BJ (cell line): ENCODE measurements at regions of chr17 and their contacts with region 1.

Region 1: GRCh38 chr17:30336369-30337171 is 2.7 kb upstream of the TMIGD1 start:
- DNase-seq: no peak
- H3K4me3 ChIP-seq: no peak overlapping the region
- H3K27me3 ChIP-seq: no peaks in the 10 kb centered on the region
- CTCF ChIP-seq: peak; percentile 40; the same call in 1 of the 2 replicates

Region 2: DNA sequence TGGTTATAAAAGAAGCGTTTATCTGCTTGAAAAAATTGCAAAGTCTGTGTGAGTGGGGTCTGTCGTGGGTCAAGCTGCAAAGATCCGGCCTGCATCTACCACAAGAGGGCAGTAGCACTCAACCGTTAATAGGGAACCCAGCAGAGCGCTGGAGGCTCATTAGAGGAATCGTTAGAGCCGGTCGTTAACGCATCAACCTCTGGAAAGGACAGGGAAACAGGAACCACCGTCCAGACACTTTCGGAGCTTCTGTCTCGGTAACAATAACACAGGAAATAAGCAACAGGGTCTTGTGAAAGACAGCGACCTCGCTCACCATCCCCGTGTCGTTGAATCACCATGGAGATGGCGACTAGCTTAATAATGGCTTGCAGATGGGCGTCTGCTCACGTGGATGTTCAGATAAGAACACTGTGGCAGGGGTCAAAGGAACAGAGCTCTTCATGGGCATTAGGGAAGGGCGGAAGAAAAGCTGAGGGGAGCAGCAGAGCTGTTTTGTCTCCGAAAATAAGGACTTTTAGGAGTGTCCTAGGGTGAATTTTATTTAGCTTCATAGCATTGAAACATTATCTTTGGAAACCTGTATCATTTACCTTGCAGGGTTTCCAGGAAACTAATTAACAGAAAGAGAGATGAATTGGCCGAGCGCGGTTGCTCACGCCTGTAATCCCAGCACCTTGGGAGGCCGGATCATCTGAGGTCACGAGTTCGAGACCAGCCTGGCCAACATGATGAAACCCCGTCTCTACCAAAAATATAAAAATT is 231.8 kb before region 1 on chr17:
- CTCF ChIA-PET with region 1: interaction called, 20 read pairs
- POLR2A ChIA-PET with region 1: no interaction called
- DNase-seq: no peak
- H3K4me3 ChIP-seq: peak overlapping the region; percentile 38
- H3K27me3 ChIP-seq: peaks cover 4% of the 10 kb centered on the region; the same call in 1 of the 2 replicates
- CTCF ChIP-seq: peak; percentile 94

Region 3: DNA sequence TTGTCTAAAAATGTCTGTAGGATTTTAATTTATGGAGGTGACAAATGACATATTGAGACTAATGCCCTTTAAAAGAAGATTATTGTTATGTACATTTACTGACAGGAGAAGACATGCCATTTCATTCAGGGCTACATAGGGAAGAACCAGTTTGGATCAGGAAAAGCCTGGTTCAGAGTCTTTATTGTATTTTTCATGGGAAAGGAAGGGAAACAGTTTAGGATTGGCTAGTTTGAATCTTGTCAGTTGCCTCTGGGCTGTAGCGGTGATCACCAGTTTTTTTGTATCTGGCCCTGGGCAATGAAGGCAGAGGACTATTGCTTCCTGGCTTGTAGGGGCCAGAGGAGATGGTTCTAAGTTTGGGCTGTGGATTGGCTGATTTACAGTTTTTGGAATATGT is 188.2 kb before region 1 on chr17:
- CTCF ChIA-PET with region 1: no interaction called
- POLR2A ChIA-PET with region 1: no interaction called
- DNase-seq: no peak
- H3K4me3 ChIP-seq: no peak overlapping the region
- H3K27me3 ChIP-seq: no peaks in the 10 kb centered on the region
- CTCF ChIP-seq: no peak

Region 4: GRCh38 chr17:30312226-30312625 is 24.3 kb before region 1 on chr17:
- CTCF ChIA-PET with region 1: interaction called, 5 read pairs
- POLR2A ChIA-PET with region 1: interaction called, 21 read pairs
- DNase-seq: no peak
- H3K4me3 ChIP-seq: no peak overlapping the region
- H3K27me3 ChIP-seq: no peaks in the 10 kb centered on the region
- CTCF ChIP-seq: no peak

Region 5: GRCh38 chr17:30361766-30362279 is 25.3 kb after region 1 on chr17:
- CTCF ChIA-PET with region 1: interaction called, 10 read pairs
- POLR2A ChIA-PET with region 1: no interaction called
- DNase-seq: no peak
- H3K4me3 ChIP-seq: no peak overlapping the region
- H3K27me3 ChIP-seq: no peaks in the 10 kb centered on the region
- CTCF ChIP-seq: no peak

Region 6: GRCh38 chr17:30477083-30477773 is 140.7 kb after region 1 on chr17 and contains the start of gene GOSR1:
- CTCF ChIA-PET with region 1: interaction called, 17 read pairs
- POLR2A ChIA-PET with region 1: no interaction called
- DNase-seq: peak; percentile 71
- H3K4me3 ChIP-seq: peak within 1 kb of the TSS; percentile 86
- H3K27me3 ChIP-seq: no peaks in the 10 kb centered on the region
- CTCF ChIP-seq: peak; percentile 81
- polyA plus RNA-seq, gene GOSR1: 12.5 and 21.4 TPM in 2 replicates